CD8-positive, alpha-beta T cell (primary cell): ENCODE measurements at regions of chr9 and their contacts with region 1.

Region 1: GRCh38 chr9:70602321-70603019 is 188.0 kb upstream of the KLF9 start:
- DNase-seq: peak in 8 of 9 experiments; percentile 8 to 72 (median 37)
- ATAC-seq: peak; percentile 78
- H3K4me3 ChIP-seq: no peak overlapping the region
- H3K4me3 Mint-ChIP-seq: no peak overlapping the region
- H3K27ac ChIP-seq: no peak overlapping the region
- H3K27ac Mint-ChIP-seq: no peak overlapping the region
- H3K4me1 ChIP-seq: no peaks in the 10 kb centered on the region
- H3K4me1 Mint-ChIP-seq: peaks cover 3% of the 10 kb centered on the region
- H3K27me3 ChIP-seq: no peaks in the 10 kb centered on the region
- H3K27me3 Mint-ChIP-seq: no peaks in the 10 kb centered on the region
- CTCF ChIP-seq: peak; percentile 84

Region 2: GRCh38 chr9:69971643-69972449 is 630.6 kb before region 1 on chr9:
- CTCF ChIA-PET with region 1: interaction called, 11 read pairs
- POLR2A ChIA-PET with region 1: no interaction called
- intact Hi-C with region 1: loop called in 1 of 2 experiments (anchors 1 kb)
- DNase-seq: peak; percentile 1 to 52 (median 38)
- ATAC-seq: no peak
- H3K4me3 ChIP-seq: no peak overlapping the region
- H3K4me3 Mint-ChIP-seq: no peak overlapping the region
- H3K27ac ChIP-seq: no peak overlapping the region
- H3K27ac Mint-ChIP-seq: no peak overlapping the region
- H3K4me1 ChIP-seq: no peaks in the 10 kb centered on the region
- H3K4me1 Mint-ChIP-seq: no peaks in the 10 kb centered on the region
- H3K27me3 ChIP-seq: no peaks in the 10 kb centered on the region
- H3K27me3 Mint-ChIP-seq: peaks cover 20% of the 10 kb centered on the region
- CTCF ChIP-seq: peak; percentile 53

Region 3: GRCh38 chr9:70340572-70340971 is 261.9 kb before region 1 on chr9:
- CTCF ChIA-PET with region 1: interaction called, 49 read pairs
- POLR2A ChIA-PET with region 1: interaction called, 3 read pairs
- intact Hi-C with region 1: loop called (anchors 1 kb)
- DNase-seq: peak in 2 of 9 experiments; percentile 22 to 47
- ATAC-seq: no peak
- H3K4me3 ChIP-seq: no peak overlapping the region
- H3K4me3 Mint-ChIP-seq: no peak overlapping the region
- H3K27ac ChIP-seq: no peak overlapping the region
- H3K27ac Mint-ChIP-seq: no peak overlapping the region
- H3K4me1 ChIP-seq: no peaks in the 10 kb centered on the region
- H3K4me1 Mint-ChIP-seq: peaks cover 2% of the 10 kb centered on the region
- H3K27me3 ChIP-seq: no peaks in the 10 kb centered on the region
- H3K27me3 Mint-ChIP-seq: no peaks in the 10 kb centered on the region
- CTCF ChIP-seq: peak; percentile 85

Region 4: DNA sequence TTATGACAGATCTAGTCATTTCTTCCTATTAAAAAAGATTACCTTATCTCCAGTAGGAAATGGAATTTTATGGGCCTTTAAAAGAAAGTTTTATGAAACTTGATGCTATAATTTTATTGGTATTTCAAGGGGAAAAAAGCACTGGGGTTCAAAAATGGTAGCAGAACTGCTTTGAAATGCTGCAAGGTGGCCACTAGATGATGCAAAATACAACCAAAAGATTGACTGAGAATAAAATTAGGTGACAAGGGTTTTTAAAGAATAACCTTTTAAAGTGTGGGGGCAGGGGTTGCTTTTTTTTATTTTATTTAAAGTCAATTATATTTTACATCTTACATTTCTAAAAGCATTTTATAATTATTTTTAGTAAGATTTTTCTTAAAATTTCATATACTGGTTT is 249.7 kb before region 1 on chr9:
- CTCF ChIA-PET with region 1: interaction called, 22 read pairs
- POLR2A ChIA-PET with region 1: interaction called, 5 read pairs
- intact Hi-C with region 1: loop called (anchors 1 kb)
- DNase-seq: peak in 2 of 9 experiments; percentile 34 to 53
- ATAC-seq: peak; percentile 36
- H3K4me3 ChIP-seq: no peak overlapping the region
- H3K4me3 Mint-ChIP-seq: no peak overlapping the region
- H3K27ac ChIP-seq: no peak overlapping the region
- H3K27ac Mint-ChIP-seq: no peak overlapping the region
- H3K4me1 ChIP-seq: no peaks in the 10 kb centered on the region
- H3K4me1 Mint-ChIP-seq: peaks cover 2% of the 10 kb centered on the region
- H3K27me3 ChIP-seq: no peaks in the 10 kb centered on the region
- H3K27me3 Mint-ChIP-seq: no peaks in the 10 kb centered on the region
- CTCF ChIP-seq: peak; percentile 75

Region 5: DNA sequence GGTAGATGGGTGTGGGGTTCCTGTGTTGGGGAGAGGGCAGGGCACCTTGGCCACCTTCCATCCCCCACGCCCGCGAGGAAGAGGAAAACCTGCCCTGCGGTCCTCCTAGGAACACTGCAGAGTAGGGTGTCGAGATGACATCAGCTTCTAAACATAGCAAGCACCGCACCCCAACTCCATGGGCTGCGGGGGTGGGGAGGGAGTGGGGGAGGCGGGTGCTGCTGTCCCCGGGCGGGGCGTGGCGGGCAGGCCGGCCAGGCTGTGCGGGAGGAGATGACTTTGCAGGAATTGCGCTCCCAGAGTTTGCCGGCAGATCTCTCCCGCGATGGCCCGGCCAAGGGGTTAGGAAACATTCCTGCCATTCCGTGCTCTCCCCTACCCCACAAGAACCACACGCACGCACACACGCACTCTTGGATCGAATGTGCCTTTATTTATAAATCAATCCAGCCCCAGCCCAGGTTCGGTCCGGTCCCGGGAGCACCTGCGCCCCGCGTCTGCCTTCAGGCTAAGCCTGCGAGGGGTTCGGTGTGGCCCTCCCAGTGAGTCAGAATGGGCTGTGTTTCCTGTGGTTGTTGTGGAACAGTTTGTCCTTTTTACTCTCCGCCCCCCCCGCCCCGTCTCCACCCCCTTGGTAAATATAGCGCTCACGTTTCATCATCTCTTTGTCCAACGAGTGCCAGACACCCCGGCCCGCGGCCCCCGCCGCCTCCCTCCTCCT is 182.8 kb before region 1 on chr9:
- CTCF ChIA-PET with region 1: interaction called, 17 read pairs
- POLR2A ChIA-PET with region 1: interaction called, 11 read pairs
- intact Hi-C with region 1: loop called (anchors 5 kb)
- DNase-seq: peak; percentile 77 to 94 (median 86)
- ATAC-seq: peak; percentile 56
- H3K4me3 ChIP-seq: peak overlapping the region; percentile 73 to 79
- H3K4me3 Mint-ChIP-seq: peak overlapping the region; percentile 95
- H3K27ac ChIP-seq: peak overlapping the region; percentile 95 to 97
- H3K27ac Mint-ChIP-seq: peak overlapping the region; percentile 100
- H3K4me1 ChIP-seq: peaks cover 42% of the 10 kb centered on the region
- H3K4me1 Mint-ChIP-seq: peaks cover 51% of the 10 kb centered on the region
- H3K27me3 ChIP-seq: no peaks in the 10 kb centered on the region
- H3K27me3 Mint-ChIP-seq: no peaks in the 10 kb centered on the region
- CTCF ChIP-seq: no peak

Region 6: GRCh38 chr9:70494221-70494620 is 108.2 kb before region 1 on chr9:
- CTCF ChIA-PET with region 1: interaction called, 10 read pairs
- POLR2A ChIA-PET with region 1: interaction called, 3 read pairs
- intact Hi-C with region 1: loop called in 1 of 2 experiments (anchors 5 kb)
- DNase-seq: no peak
- ATAC-seq: no peak
- H3K4me3 ChIP-seq: no peak overlapping the region
- H3K4me3 Mint-ChIP-seq: no peak overlapping the region
- H3K27ac ChIP-seq: no peak overlapping the region
- H3K27ac Mint-ChIP-seq: no peak overlapping the region
- H3K4me1 ChIP-seq: peaks cover 7% of the 10 kb centered on the region
- H3K4me1 Mint-ChIP-seq: peaks cover 22% of the 10 kb centered on the region
- H3K27me3 ChIP-seq: no peaks in the 10 kb centered on the region
- H3K27me3 Mint-ChIP-seq: no peaks in the 10 kb centered on the region
- CTCF ChIP-seq: no peak

Region 7: DNA sequence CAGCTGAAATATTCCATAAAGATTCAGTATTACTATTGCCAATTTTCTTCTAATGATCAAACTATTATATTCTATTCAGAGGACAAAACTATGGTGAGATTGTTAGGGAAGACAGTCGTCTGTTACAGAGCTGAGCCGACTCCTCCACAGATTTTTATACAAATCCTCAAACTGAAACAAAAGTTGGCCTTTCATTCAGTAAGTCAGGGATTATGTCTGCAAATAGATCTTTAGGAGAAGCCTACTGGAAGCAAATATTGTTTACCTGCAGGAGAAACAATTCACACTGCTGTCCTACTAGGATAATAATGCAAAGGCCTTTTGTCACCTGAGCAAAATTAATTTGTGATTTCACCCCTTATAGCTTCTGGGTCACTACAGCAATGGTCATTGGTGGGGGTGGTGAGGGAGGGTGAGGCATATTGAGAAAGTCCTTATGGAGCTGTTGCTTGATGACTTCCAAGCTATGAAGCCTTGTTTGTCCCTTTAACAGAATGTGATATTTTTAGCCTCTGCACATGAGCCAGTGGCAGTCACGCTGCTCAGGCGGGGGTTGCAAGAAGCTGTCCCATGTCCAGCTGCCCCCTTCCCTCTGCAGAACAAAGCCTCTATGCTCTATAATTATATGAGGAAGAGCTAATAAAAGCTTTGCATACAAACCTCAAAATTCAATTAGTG is 12.5 kb after region 1 on chr9:
- CTCF ChIA-PET with region 1: interaction called, 13 read pairs
- POLR2A ChIA-PET with region 1: no interaction called
- intact Hi-C with region 1: no loop called
- DNase-seq: no peak
- ATAC-seq: no peak
- H3K4me3 ChIP-seq: no peak overlapping the region
- H3K4me3 Mint-ChIP-seq: no peak overlapping the region
- H3K27ac ChIP-seq: no peak overlapping the region
- H3K27ac Mint-ChIP-seq: no peak overlapping the region
- H3K4me1 ChIP-seq: no peaks in the 10 kb centered on the region
- H3K4me1 Mint-ChIP-seq: no peaks in the 10 kb centered on the region
- H3K27me3 ChIP-seq: no peaks in the 10 kb centered on the region
- H3K27me3 Mint-ChIP-seq: no peaks in the 10 kb centered on the region
- CTCF ChIP-seq: no peak

Region 8: GRCh38 chr9:71384352-71384751 is 781.9 kb after region 1 on chr9:
- CTCF ChIA-PET with region 1: no interaction called
- POLR2A ChIA-PET with region 1: no interaction called
- intact Hi-C with region 1: no loop called
- DNase-seq: no peak
- ATAC-seq: no peak
- H3K4me3 ChIP-seq: no peak overlapping the region
- H3K4me3 Mint-ChIP-seq: no peak overlapping the region
- H3K27ac ChIP-seq: no peak overlapping the region
- H3K27ac Mint-ChIP-seq: no peak overlapping the region
- H3K4me1 ChIP-seq: no peaks in the 10 kb centered on the region
- H3K4me1 Mint-ChIP-seq: no peaks in the 10 kb centered on the region
- H3K27me3 ChIP-seq: no peaks in the 10 kb centered on the region
- H3K27me3 Mint-ChIP-seq: no peaks in the 10 kb centered on the region
- CTCF ChIP-seq: no peak